ENCODE measurements at regions of chr2 and their contacts with region 1.

Region 1: GRCh38 chr2:215136669-215137328 is 1.6 kb downstream of the ABCA12 start:
- DNase-seq: peak; percentile 94
- H3K4me3 ChIP-seq: peak overlapping the region; percentile 53 to 64 (median 59)
- H3K27ac ChIP-seq: peak overlapping the region; percentile 98
- H3K4me1 ChIP-seq: peaks cover 38% of the 10 kb centered on the region
- H3K27me3 ChIP-seq: no peaks in the 10 kb centered on the region
- CTCF ChIP-seq: no peak

Region 2: DNA sequence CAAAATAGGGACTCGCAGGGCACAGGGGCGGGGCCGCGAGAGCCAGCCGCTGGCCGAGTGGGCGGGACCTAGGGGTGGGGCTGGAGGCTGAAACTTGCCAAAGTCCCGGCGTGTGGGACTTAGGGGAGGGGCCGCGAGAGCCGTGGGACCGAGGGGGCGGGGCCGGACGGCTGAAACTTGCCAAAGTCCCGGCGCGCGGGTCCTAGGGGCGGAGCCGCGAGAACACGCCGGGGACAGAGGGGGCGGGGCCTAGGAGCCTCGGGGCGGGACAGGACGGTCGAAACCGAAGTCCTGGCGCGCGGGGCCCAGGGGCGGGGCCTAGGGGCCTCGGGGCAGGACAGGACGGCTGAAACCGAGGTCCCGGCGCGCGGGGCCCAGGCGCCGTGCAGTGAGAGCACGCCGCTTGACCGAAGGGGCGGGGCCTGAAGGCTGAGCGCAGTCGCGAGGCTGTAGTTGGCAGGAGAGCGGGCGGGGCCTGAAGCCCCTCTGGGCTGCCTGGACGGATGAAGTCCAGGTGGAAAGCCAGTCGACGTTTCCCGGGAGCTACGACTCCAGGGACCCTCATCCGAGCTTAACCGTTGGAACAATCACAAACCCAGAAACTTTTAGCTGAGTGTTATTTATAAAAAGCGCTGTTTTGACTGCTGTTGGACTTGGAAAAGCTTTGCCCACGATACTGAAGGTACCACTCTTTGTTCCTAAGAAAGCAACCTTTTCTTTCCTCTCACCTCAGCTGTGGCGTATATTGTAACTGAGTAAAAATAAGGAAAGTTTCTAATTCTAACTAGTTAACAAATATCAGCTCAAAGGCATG is 326.8 kb before region 1 on chr2:
- CTCF ChIA-PET with region 1: no interaction called
- dilution Hi-C with region 1: no loop called
- in situ Hi-C with region 1: no loop called
- intact Hi-C with region 1: loop called (anchors 1 kb)
- DNase-seq: peak; percentile 98
- H3K4me3 ChIP-seq: peak overlapping the region; percentile 81 to 99 (median 92)
- H3K27ac ChIP-seq: peak overlapping the region; percentile 87
- H3K4me1 ChIP-seq: peaks cover 24% of the 10 kb centered on the region
- H3K27me3 ChIP-seq: no peaks in the 10 kb centered on the region
- CTCF ChIP-seq: no peak

Region 3: GRCh38 chr2:215071667-215072066 is 65.1 kb before region 1 on chr2:
- CTCF ChIA-PET with region 1: no interaction called
- dilution Hi-C with region 1: no loop called
- in situ Hi-C with region 1: no loop called
- intact Hi-C with region 1: loop called (anchors 1 kb)
- DNase-seq: peak; percentile 96
- H3K4me3 ChIP-seq: no peak overlapping the region
- H3K27ac ChIP-seq: peak overlapping the region; percentile 73
- H3K4me1 ChIP-seq: peaks cover 12% of the 10 kb centered on the region
- H3K27me3 ChIP-seq: no peaks in the 10 kb centered on the region
- CTCF ChIP-seq: no peak

Region 4: DNA sequence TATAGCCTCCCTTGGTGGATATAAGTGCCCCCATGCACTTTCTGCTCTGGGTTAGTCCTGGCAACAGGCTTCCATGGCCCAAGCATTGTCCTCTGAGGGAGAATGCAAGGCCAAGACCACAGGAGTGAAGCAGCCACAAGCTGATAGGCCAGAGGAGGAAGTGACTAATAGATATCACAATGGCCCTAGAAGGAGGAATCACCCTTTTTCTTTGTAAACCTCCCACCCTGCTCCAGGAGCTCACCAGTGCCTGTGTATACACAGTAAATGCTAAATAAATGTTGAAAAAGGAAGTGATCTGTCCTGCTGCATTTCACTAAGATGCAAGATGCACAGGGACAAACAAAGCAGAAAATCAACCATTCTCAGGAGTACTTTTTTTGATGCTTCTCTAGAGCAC is 51.3 kb after region 1 on chr2:
- CTCF ChIA-PET with region 1: no interaction called
- dilution Hi-C with region 1: no loop called
- in situ Hi-C with region 1: no loop called
- intact Hi-C with region 1: loop called (anchors 1 kb)
- DNase-seq: peak; percentile 4
- H3K4me3 ChIP-seq: no peak overlapping the region
- H3K27ac ChIP-seq: no peak overlapping the region
- H3K4me1 ChIP-seq: peaks cover 35% of the 10 kb centered on the region
- H3K27me3 ChIP-seq: no peaks in the 10 kb centered on the region
- CTCF ChIP-seq: no peak

Region 5: GRCh38 chr2:215207791-215208367 is 71.1 kb after region 1 on chr2:
- CTCF ChIA-PET with region 1: no interaction called
- dilution Hi-C with region 1: loop called (anchors 5 kb)
- in situ Hi-C with region 1: no loop called
- intact Hi-C with region 1: no loop called
- DNase-seq: no peak
- H3K4me3 ChIP-seq: no peak overlapping the region
- H3K27ac ChIP-seq: no peak overlapping the region
- H3K4me1 ChIP-seq: no peaks in the 10 kb centered on the region
- H3K27me3 ChIP-seq: no peaks in the 10 kb centered on the region
- CTCF ChIP-seq: no peak

Measured in mammary epithelial cell (primary cell).